BJ (cell line): ENCODE measurements at regions of chr7 and their contacts with region 1.

Region 1: DNA sequence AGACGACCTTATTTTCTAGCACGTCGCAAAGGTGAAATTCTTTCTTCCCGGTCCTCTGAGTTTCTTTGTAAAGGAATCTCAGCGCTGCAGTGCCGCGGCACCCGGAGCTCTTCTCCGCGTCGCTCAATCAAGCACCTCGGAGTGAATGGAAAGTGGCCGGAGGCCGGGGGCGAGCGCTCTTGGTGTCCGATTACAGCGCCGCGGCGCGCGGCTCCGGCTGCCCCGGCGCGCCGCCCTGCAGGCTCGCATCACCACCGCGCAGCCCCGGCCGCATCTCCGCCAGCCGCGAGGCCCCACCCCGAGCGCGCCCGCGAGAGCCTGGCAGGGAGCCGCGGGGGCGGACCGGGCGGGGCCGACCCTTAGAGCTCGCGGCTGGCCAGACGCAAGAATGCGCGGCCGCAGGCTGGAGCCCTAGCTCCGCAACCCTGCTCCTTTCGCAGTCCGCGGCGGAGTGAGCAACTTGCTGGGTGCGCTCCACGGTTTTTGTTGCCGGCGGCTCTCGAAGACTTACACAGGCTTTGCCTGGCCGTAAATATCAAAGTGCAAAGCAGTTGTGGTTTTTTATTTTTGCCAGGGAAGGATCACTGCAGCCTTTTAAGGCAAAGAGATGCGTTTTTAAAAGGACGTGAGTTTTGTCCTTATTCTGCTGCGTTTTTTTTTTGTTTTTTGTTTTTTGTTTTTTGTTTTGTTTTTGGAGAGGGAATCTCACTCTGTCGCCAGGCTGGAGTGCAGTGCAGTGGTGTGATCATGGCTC is at the start of gene SEMA3C:
- DNase-seq: peak; percentile 75
- H3K4me3 ChIP-seq: peak within 1 kb of the TSS; percentile 52
- H3K27me3 ChIP-seq: no peaks in the 10 kb centered on the region
- CTCF ChIP-seq: peak; percentile 25
- polyA plus RNA-seq, gene SEMA3C: 64.1 and 118 TPM in 2 replicates

Region 2: DNA sequence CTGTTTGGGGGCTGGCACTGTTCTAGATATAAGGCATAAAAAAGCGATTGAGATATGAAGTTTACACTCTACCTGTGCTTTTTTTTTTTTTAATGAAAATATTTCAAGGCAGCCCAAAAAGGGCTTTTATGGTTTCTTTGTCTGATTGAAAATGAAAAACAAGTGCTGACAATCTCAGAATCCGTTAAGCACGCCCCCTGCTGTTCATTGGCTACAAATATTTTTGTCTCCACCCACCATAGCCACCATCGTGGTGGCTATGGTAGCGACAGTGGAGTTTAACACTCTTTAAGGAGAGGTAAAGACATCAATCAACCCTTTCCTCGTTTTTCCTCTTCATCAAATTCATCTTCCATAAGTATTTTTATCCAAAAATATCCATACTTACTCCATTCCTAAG is 186.5 kb before region 1 on chr7:
- CTCF ChIA-PET with region 1: no interaction called
- POLR2A ChIA-PET with region 1: no interaction called
- DNase-seq: no peak
- H3K4me3 ChIP-seq: no peak overlapping the region
- H3K27me3 ChIP-seq: no peaks in the 10 kb centered on the region
- CTCF ChIP-seq: no peak

Region 3: GRCh38 chr7:81447351-81447952 is 528.4 kb after region 1 on chr7:
- CTCF ChIA-PET with region 1: interaction called, 13 read pairs
- POLR2A ChIA-PET with region 1: no interaction called
- DNase-seq: peak; percentile 9
- H3K4me3 ChIP-seq: no peak overlapping the region
- H3K27me3 ChIP-seq: no peaks in the 10 kb centered on the region
- CTCF ChIP-seq: peak; percentile 64

Region 4: DNA sequence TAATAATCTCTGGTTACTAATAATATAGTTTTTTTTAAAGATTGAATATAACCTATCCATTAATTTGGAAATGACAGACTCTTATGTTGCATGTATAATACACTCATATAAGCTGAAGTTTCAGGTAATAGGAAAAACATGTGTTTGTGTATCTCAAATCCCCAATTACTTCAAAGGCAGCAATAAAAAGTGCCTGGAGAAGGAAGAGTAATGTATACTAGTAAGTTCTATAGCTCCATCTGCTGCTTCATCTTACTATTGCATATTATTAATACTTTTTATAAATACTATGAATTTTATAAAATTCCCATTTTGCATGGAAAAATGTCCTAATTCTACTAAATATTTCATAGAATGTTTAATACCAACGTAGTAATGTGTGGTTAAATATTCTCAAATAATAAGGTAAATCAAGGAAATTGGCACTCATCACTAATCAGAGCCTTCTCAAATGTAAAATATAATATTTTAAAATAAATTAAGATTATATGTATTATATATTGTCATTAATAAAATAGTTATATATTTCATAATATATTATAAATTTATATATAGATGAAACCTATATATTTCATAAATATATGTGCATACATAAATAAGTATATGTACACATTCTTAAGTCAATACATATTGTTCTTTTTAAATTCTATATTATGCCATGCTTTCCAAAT is 538.9 kb after region 1 on chr7:
- CTCF ChIA-PET with region 1: interaction called, 27 read pairs
- POLR2A ChIA-PET with region 1: no interaction called
- DNase-seq: no peak
- H3K4me3 ChIP-seq: no peak overlapping the region
- H3K27me3 ChIP-seq: no peaks in the 10 kb centered on the region
- CTCF ChIP-seq: peak; percentile 43